ENCODE measurements at regions of chr2 and their contacts with region 1.

Region 1: GRCh38 chr2:118003396-118003824 is 10.5 kb downstream of the CCDC93 start:
- DNase-seq: peak; percentile 43
- H3K4me3 Mint-ChIP-seq: no peak overlapping the region
- H3K27ac Mint-ChIP-seq: peak overlapping the region; percentile 43
- H3K4me1 Mint-ChIP-seq: peaks cover 21% of the 10 kb centered on the region
- H3K27me3 Mint-ChIP-seq: no peaks in the 10 kb centered on the region

Region 2: DNA sequence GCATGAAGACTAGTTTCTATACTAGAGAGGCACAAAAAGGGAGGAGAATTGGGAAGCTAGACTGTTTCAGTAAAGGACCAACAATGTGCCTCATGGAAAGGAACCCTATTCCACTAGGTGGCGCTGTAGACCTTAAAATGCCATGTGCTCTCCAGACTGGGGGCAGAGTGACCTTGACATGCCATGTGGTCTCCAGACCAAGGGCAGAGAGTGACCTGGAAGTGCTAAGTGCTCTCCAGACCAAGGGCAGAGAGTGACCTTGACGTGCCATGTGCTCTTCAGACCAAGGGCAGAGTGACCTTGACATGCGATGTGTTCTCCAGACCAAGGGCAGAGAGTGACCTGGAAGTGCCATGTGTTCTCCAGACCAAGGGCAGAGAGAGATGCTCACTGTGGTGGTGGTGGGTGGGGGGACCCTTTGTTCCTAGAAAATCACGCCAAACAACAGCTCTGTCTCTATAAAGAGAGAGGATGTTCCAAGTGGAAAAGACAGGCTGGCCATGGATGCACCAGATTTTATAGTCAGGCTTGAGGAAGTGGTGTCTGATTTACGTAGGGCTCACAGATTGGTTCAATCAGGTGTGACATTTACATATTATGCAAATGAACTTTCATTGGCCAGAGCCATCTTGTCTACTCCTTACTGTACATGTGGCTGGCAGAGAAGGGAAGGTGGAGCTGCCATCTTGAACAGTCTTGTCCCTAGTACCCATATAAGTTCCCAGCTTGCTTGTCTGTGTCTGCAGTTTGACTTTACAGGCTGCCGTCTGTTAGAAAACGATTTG is 532.9 kb before region 1 on chr2:
- CTCF ChIA-PET with region 1: interaction called, 4 read pairs
- POLR2A ChIA-PET with region 1: no interaction called
- intact Hi-C with region 1: loop called (anchors 10 kb)
- DNase-seq: peak; percentile 13
- H3K4me3 Mint-ChIP-seq: no peak overlapping the region
- H3K27ac Mint-ChIP-seq: no peak overlapping the region
- H3K4me1 Mint-ChIP-seq: no peaks in the 10 kb centered on the region
- H3K27me3 Mint-ChIP-seq: no peaks in the 10 kb centered on the region

Region 3: GRCh38 chr2:117714745-117715417 is 288.5 kb before region 1 on chr2:
- CTCF ChIA-PET with region 1: no interaction called
- POLR2A ChIA-PET with region 1: no interaction called
- intact Hi-C with region 1: no loop called
- DNase-seq: no peak
- H3K4me3 Mint-ChIP-seq: no peak overlapping the region
- H3K27ac Mint-ChIP-seq: no peak overlapping the region
- H3K4me1 Mint-ChIP-seq: no peaks in the 10 kb centered on the region
- H3K27me3 Mint-ChIP-seq: no peaks in the 10 kb centered on the region

Region 4: DNA sequence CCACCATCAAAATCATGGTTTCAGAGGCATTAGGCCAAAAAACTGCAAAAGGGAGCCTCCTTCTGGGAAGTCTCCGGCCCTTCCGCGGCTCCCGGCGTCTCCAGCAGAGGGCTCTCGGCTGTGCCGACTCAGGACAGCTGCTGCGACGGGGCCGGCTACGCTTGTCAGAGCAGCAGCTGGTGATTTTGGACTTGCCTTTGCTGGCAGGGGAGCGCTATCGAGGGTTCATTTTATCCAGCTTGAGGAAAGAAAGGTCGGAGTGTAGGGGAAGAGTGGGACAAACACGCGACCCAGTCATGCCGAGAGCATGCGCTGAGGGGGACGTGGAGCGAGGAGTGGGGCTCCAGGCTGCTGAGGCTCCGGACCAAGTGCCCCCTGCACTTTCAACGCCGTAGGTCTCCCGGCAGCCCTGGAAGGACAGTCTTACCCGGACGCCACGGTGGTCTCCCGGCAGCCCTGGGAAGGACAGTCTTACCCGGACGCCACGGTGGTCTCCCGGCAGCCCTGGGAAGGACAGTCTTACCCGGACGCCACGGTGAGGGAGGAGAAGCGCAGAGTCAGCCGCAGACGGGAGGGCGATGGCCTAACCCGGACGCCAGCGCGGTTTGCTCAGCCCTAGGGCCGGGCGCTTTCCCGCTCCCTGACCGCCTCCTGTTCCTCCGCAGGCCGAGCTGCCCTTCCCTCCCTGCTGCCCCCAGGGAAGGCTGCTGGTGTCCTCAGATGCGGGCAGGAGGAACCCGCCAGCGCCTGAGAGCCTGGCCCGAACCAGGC is 167.2 kb before region 1 on chr2:
- CTCF ChIA-PET with region 1: interaction called, 17 read pairs
- POLR2A ChIA-PET with region 1: no interaction called
- intact Hi-C with region 1: loop called (anchors 5 kb)
- DNase-seq: peak; percentile 68
- H3K4me3 Mint-ChIP-seq: peak overlapping the region; percentile 46
- H3K27ac Mint-ChIP-seq: no peak overlapping the region
- H3K4me1 Mint-ChIP-seq: peaks cover 13% of the 10 kb centered on the region
- H3K27me3 Mint-ChIP-seq: no peaks in the 10 kb centered on the region

Region 5: DNA sequence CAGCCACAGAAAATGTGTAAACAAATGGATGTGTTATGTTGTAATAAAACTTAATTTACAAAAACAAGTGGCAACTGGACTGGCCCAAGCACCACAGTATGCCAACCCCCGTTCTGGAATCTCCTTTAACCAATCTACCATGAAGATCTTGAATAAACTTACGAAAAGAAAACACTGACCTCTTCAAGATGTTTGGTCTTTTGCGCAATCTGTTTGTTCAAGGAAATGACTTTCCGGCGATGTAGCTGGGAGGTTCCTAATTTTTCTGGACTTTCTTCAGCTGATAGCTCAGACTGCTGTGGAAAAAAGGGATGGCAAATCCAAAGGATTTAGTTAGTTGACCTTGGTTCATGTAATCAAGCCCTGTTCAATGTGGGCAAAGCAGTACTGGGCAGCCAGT is 45.2 kb before region 1 on chr2:
- CTCF ChIA-PET with region 1: interaction called, 25 read pairs
- POLR2A ChIA-PET with region 1: no interaction called
- intact Hi-C with region 1: loop called (anchors 5 kb)
- DNase-seq: no peak
- H3K4me3 Mint-ChIP-seq: no peak overlapping the region
- H3K27ac Mint-ChIP-seq: no peak overlapping the region
- H3K4me1 Mint-ChIP-seq: no peaks in the 10 kb centered on the region
- H3K27me3 Mint-ChIP-seq: no peaks in the 10 kb centered on the region

Region 6: GRCh38 chr2:117972425-117973138 is 30.8 kb before region 1 on chr2:
- CTCF ChIA-PET with region 1: interaction called, 15 read pairs
- POLR2A ChIA-PET with region 1: no interaction called
- intact Hi-C with region 1: no loop called
- DNase-seq: no peak
- H3K4me3 Mint-ChIP-seq: no peak overlapping the region
- H3K27ac Mint-ChIP-seq: no peak overlapping the region
- H3K4me1 Mint-ChIP-seq: no peaks in the 10 kb centered on the region
- H3K27me3 Mint-ChIP-seq: no peaks in the 10 kb centered on the region

Region 7: GRCh38 chr2:117987121-117987520 is 16.3 kb before region 1 on chr2:
- CTCF ChIA-PET with region 1: interaction called, 72 read pairs
- POLR2A ChIA-PET with region 1: interaction called, 8 read pairs
- intact Hi-C with region 1: no loop called
- DNase-seq: no peak
- H3K4me3 Mint-ChIP-seq: no peak overlapping the region
- H3K27ac Mint-ChIP-seq: no peak overlapping the region
- H3K4me1 Mint-ChIP-seq: peaks cover 7% of the 10 kb centered on the region
- H3K27me3 Mint-ChIP-seq: no peaks in the 10 kb centered on the region